ENCODE measurements at regions of chr10 and their contacts with region 1.

Region 1: DNA sequence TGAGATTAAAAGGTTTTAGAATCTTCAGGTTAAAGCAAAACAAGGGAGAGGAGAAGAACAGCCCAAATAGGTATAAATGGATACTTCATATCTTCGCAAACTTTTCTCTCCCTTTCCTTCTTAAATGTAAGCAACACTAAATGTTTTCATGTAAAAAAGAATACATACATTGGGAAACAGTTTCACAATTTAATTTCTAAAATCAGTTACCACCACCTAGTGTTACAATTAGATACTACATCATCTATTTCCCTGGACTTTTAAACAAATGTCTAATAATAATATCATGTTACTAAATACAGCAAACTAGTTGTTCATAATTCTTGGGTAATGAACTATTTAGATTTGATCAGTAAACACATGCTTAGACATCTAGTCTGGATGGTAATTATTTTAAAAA is 35.8 kb downstream of the MINDY3 start:
- DNase-seq: no peak
- ATAC-seq: no peak
- H3K4me3 ChIP-seq: no peak overlapping the region
- H3K27ac ChIP-seq: no peak overlapping the region
- H3K4me1 ChIP-seq: no peaks in the 10 kb centered on the region
- H3K27me3 ChIP-seq: no peaks in the 10 kb centered on the region
- CTCF ChIP-seq: peak in 2 of 3 experiments; percentile 29 to 57; a peak in 4 of 6 replicates
- POLR2A ChIP-seq: no peak
- RAD21 ChIP-seq: peak; percentile 51

Region 2: GRCh38 chr10:15122477-15123030 is 701.9 kb before region 1 on chr10:
- CTCF ChIA-PET with region 1: no interaction called
- POLR2A ChIA-PET with region 1: no interaction called
- RAD21 ChIA-PET with region 1: no interaction called
- intact Hi-C with region 1: no loop called
- DNase-seq: no peak
- ATAC-seq: no peak
- H3K4me3 ChIP-seq: no peak overlapping the region
- H3K27ac ChIP-seq: no peak overlapping the region
- H3K4me1 ChIP-seq: no peaks in the 10 kb centered on the region
- H3K27me3 ChIP-seq: no peaks in the 10 kb centered on the region
- CTCF ChIP-seq: no peak
- POLR2A ChIP-seq: no peak
- RAD21 ChIP-seq: no peak

Region 3: GRCh38 chr10:15439341-15439842 is 385.1 kb before region 1 on chr10:
- CTCF ChIA-PET with region 1: no interaction called
- POLR2A ChIA-PET with region 1: no interaction called
- RAD21 ChIA-PET with region 1: no interaction called
- intact Hi-C with region 1: loop called (anchors 5 kb)
- DNase-seq: no peak
- ATAC-seq: peak; percentile 76
- H3K4me3 ChIP-seq: no peak overlapping the region
- H3K27ac ChIP-seq: no peak overlapping the region
- H3K4me1 ChIP-seq: no peaks in the 10 kb centered on the region
- H3K27me3 ChIP-seq: peaks cover 9% of the 10 kb centered on the region
- CTCF ChIP-seq: peak in 2 of 3 experiments; percentile 47 to 54; a peak in 4 of 6 replicates
- POLR2A ChIP-seq: no peak
- RAD21 ChIP-seq: no peak

Region 4: DNA sequence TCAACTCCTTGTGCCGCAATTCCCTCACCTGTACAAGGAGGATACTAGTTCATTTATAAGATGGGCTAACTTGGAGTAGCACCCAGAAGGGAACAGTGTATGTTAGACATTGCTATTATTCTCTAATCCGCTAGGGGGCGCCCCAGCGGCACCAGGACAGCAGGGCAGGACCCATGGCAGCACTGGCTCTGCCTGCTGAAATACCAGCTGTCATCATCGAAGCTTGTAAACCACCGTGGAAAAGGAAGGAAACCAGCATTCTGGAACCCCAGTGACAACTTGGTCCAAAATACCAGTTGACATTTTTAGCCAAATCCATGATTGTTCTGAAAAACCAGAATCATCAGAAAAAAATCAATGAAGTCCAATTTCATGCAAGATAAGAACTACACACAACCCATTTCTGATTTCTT is 239.2 kb before region 1 on chr10:
- CTCF ChIA-PET with region 1: no interaction called
- POLR2A ChIA-PET with region 1: no interaction called
- RAD21 ChIA-PET with region 1: no interaction called
- intact Hi-C with region 1: loop called (anchors 5 kb)
- DNase-seq: peak; percentile 51
- ATAC-seq: peak; percentile 100
- H3K4me3 ChIP-seq: no peak overlapping the region
- H3K27ac ChIP-seq: no peak overlapping the region
- H3K4me1 ChIP-seq: no peaks in the 10 kb centered on the region
- H3K27me3 ChIP-seq: peaks cover 37% of the 10 kb centered on the region
- CTCF ChIP-seq: peak; percentile 60 to 97 (median 93)
- POLR2A ChIP-seq: no peak
- RAD21 ChIP-seq: peak; percentile 68

Region 5: DNA sequence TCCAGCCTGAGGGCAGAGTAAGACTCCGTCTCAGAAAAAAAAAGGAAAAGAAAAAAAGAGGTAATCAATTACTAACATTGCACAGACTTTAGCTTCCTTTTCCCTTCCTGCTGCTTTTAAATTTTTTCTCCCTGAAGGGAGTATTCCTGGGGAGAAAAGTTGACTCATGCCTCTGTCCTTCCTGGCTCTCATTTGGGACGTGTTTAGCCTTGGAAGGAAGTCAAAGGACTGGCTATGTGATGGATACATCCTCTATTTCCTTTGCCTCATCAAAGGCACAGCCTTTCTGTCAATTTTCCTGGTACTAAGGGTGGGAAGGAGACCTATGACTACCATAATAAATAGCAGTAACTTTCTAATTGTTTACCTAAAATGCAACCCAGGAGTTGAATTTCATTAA is 182.4 kb before region 1 on chr10:
- CTCF ChIA-PET with region 1: no interaction called
- POLR2A ChIA-PET with region 1: no interaction called
- RAD21 ChIA-PET with region 1: no interaction called
- intact Hi-C with region 1: loop called (anchors 5 kb)
- DNase-seq: no peak
- ATAC-seq: no peak
- H3K4me3 ChIP-seq: no peak overlapping the region
- H3K27ac ChIP-seq: no peak overlapping the region
- H3K4me1 ChIP-seq: no peaks in the 10 kb centered on the region
- H3K27me3 ChIP-seq: peaks cover 56% of the 10 kb centered on the region
- CTCF ChIP-seq: no peak
- POLR2A ChIP-seq: no peak
- RAD21 ChIP-seq: no peak

Measured in HCT116 (cell line).